ENCODE measurements at regions of chr7 and their contacts with region 1.

Region 1: DNA sequence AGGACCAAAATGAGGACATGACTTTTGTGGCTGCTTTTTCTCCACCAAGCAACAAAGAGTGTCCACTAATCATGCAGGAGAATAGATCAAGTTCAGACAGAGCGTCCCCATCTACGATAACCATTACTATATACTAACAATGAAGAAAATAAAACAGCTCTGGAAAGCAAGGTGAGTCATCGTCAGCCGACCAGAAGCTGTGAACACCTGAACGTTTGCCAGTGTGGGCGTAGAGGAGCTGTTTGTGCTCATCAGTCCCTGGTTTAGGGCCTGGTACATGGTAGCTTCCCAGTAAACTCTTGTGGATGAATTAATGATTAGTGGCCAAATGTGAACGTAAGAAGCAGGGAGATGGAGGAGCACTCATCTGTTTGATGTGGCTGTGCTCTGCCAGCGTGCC is 180.7 kb downstream of the EVX1 start:
- DNase-seq: peak; percentile 71
- ATAC-seq: peak; percentile 60
- H3K4me3 ChIP-seq: no peak overlapping the region
- H3K27ac ChIP-seq: no peak overlapping the region
- H3K4me1 ChIP-seq: peaks cover 46% of the 10 kb centered on the region
- H3K27me3 ChIP-seq: no peaks in the 10 kb centered on the region
- CTCF ChIP-seq: no peak

Region 2: GRCh38 chr7:27235387-27236311 is 187.6 kb before region 1 on chr7:
- CTCF ChIA-PET with region 1: no interaction called
- POLR2A ChIA-PET with region 1: no interaction called
- intact Hi-C with region 1: loop called (anchors 5 kb)
- DNase-seq: peak; percentile 62
- ATAC-seq: peak; percentile 76
- H3K4me3 ChIP-seq: peak overlapping the region; percentile 72
- H3K27ac ChIP-seq: no peak overlapping the region
- H3K4me1 ChIP-seq: peaks cover 9% of the 10 kb centered on the region; the same call in 1 of the 2 replicates
- H3K27me3 ChIP-seq: no peaks in the 10 kb centered on the region
- CTCF ChIP-seq: peak; percentile 75

Region 3: GRCh38 chr7:27269455-27269854 is 153.8 kb before region 1 on chr7:
- CTCF ChIA-PET with region 1: no interaction called
- POLR2A ChIA-PET with region 1: no interaction called
- intact Hi-C with region 1: no loop called
- DNase-seq: no peak
- ATAC-seq: no peak
- H3K4me3 ChIP-seq: no peak overlapping the region
- H3K27ac ChIP-seq: no peak overlapping the region
- H3K4me1 ChIP-seq: no peaks in the 10 kb centered on the region
- H3K27me3 ChIP-seq: no peaks in the 10 kb centered on the region
- CTCF ChIP-seq: 0 out of 2 replicates have a peak, but pooled peaks have one; percentile 8

Region 4: DNA sequence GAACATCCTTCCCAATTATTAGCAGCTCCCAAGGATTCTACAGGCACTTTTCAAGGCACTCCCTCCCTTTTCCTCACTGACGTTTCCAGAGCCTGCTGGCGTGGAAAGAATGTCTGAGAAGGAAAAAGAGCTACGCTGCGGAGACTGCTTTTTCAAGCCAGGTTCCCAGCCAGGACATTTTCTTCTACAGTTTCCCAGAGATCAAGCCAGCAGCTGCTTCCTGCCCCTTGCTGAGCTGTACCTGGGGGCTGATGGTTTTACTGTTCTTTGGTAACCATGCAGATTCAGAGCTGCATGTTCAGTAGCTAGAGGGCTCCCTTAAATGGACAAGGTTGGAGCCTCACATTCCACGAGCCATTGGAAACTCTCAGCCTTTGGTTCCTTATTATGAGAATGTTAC is 47.3 kb before region 1 on chr7:
- CTCF ChIA-PET with region 1: no interaction called
- POLR2A ChIA-PET with region 1: no interaction called
- intact Hi-C with region 1: no loop called
- DNase-seq: no peak
- ATAC-seq: no peak
- H3K4me3 ChIP-seq: no peak overlapping the region
- H3K27ac ChIP-seq: 0 out of 2 replicates have a peak overlapping the region, but pooled peaks have one; percentile 11
- H3K4me1 ChIP-seq: peaks cover 35% of the 10 kb centered on the region
- H3K27me3 ChIP-seq: no peaks in the 10 kb centered on the region
- CTCF ChIP-seq: no peak

Region 5: GRCh38 chr7:27399791-27400567 is 23.3 kb before region 1 on chr7:
- CTCF ChIA-PET with region 1: no interaction called
- POLR2A ChIA-PET with region 1: no interaction called
- intact Hi-C with region 1: no loop called
- DNase-seq: no peak
- ATAC-seq: no peak
- H3K4me3 ChIP-seq: no peak overlapping the region
- H3K27ac ChIP-seq: no peak overlapping the region
- H3K4me1 ChIP-seq: no peaks in the 10 kb centered on the region
- H3K27me3 ChIP-seq: no peaks in the 10 kb centered on the region
- CTCF ChIP-seq: no peak